SK-N-SH (cell line): ENCODE measurements at regions of chr1 and their contacts with region 1.

Region 1: GRCh38 chr1:15152318-15153183 is 996 bp upstream of the TMEM51 start:
- DNase-seq: peak; percentile 79
- H3K4me3 ChIP-seq: peak overlapping the region; percentile 77 to 84
- H3K27ac ChIP-seq: peak overlapping the region; percentile 62 to 100
- H3K4me1 ChIP-seq: peaks cover 4 to 70% of the 10 kb centered on the region in 2 experiments; a peak in 3 of 4 replicates
- H3K27me3 ChIP-seq: no peaks in the 10 kb centered on the region
- CTCF ChIP-seq: peak; percentile 76
- EP300 ChIP-seq: peak in 1 of 2 experiments; percentile 29; a peak in 1 of 4 replicates
- RAD21 ChIP-seq: peak; percentile 76

Region 2: DNA sequence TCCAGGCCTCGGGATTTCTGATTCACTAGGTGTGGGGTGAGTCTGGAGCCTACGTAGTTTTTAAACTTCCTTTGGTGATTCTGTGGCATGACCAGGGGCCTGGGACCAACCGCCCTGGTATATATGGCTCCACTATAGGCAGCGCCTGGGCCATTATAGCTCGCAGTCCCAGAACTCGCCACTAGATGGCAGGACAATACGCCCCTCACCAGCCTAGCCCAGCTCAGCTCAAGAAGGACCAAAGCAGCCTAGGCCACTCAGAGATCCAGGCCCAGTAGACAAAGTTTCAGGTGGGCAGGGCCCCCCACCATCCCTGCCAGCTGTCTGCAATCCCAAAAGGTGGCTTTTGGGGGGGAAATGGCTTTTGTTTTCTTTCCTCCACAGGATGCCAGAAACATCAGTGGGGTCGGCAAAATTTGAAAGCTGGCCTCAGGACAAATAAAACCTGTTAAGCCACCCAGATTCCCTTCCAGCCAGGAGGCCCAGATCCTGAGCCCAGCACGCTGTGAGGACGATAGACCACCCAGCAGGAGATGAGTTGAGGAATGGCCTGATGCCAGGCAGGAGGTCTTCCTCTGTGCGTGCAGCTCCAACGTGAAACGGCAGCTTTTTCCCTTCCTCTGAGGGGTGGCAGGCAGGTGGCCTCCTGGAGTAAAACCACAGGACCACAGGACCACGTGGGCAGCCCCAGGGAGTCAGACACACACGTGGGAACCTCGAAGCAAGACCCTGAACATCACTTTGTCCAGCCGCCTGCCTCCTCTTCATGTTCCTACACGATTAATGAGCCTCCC is 23.8 kb before region 1 on chr1:
- CTCF ChIA-PET with region 1: interaction called, 88 read pairs
- POLR2A ChIA-PET with region 1: interaction called, 24 read pairs
- DNase-seq: peak; percentile 88
- H3K4me3 ChIP-seq: peak overlapping the region in 1 of 2 experiments; percentile 43; a peak in 1 of 4 replicates
- H3K27ac ChIP-seq: peak overlapping the region in 1 of 2 experiments; percentile 71; a peak in 2 of 4 replicates
- H3K4me1 ChIP-seq: peaks cover 0 to 7% of the 10 kb centered on the region in 2 experiments; a peak in 1 of 4 replicates
- H3K27me3 ChIP-seq: no peaks in the 10 kb centered on the region
- CTCF ChIP-seq: peak; percentile 90
- EP300 ChIP-seq: peak in 1 of 2 experiments; percentile 38; a peak in 1 of 4 replicates
- RAD21 ChIP-seq: peak; percentile 96

Region 3: GRCh38 chr1:15168479-15168878 is 15.9 kb after region 1 on chr1:
- CTCF ChIA-PET with region 1: interaction called, 19 read pairs
- POLR2A ChIA-PET with region 1: interaction called, 4 read pairs
- DNase-seq: no peak
- H3K4me3 ChIP-seq: no peak overlapping the region
- H3K27ac ChIP-seq: peak overlapping the region in 1 of 2 experiments; percentile 78; a peak in 2 of 4 replicates
- H3K4me1 ChIP-seq: peaks cover 11 to 19% of the 10 kb centered on the region in 2 experiments; a peak in 2 of 4 replicates
- H3K27me3 ChIP-seq: no peaks in the 10 kb centered on the region
- CTCF ChIP-seq: peak; percentile 30; the same call in 1 of the 2 replicates
- EP300 ChIP-seq: no peak
- RAD21 ChIP-seq: no peak

Region 4: DNA sequence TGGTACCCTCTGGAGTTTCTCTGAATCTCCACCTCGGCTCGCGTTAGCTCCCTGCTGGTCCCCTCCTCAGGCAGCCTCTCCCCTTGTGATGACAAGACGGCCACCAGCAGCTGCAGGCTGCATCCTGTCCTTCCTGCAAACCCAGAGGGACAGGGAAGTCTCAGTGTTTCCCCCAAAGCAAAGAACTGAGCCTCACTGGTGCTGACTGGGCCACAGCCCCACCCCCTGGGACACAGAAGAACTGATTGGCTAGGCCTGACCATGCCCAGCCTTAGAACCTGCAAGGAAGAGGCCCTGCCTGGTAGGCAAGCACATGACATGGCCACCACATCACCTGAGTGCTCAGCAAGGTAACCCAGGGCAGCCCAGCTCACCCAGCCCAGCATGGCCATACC is 35.6 kb after region 1 on chr1:
- CTCF ChIA-PET with region 1: interaction called, 132 read pairs
- POLR2A ChIA-PET with region 1: interaction called, 8 read pairs
- DNase-seq: peak; percentile 51
- H3K4me3 ChIP-seq: no peak overlapping the region
- H3K27ac ChIP-seq: peak overlapping the region; percentile 19 to 89; a peak in 3 of 4 replicates
- H3K4me1 ChIP-seq: peaks cover 18 to 62% of the 10 kb centered on the region in 2 experiments; a peak in 3 of 4 replicates
- H3K27me3 ChIP-seq: no peaks in the 10 kb centered on the region
- CTCF ChIP-seq: no peak
- EP300 ChIP-seq: no peak
- RAD21 ChIP-seq: no peak

Region 5: DNA sequence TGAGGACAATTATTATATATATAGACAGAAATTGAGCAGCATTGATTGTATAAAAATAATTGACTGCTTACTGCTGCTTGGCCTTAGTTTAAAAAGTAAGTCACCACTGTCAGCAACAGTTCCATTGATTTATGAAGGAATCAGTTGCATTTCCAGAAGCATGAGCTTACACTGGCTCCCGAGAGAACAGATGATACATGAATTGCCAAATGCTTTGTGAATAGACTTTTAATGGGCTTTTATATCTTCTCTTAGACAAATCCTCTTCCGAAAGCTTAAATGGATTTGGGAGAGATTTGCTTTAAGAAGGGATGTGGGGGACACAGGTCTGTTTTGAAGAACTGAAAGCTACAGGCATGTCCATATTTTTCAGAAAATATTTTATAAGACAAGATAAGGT is 102.0 kb after region 1 on chr1:
- CTCF ChIA-PET with region 1: interaction called, 11 read pairs
- POLR2A ChIA-PET with region 1: no interaction called
- DNase-seq: no peak
- H3K4me3 ChIP-seq: no peak overlapping the region
- H3K27ac ChIP-seq: no peak overlapping the region
- H3K4me1 ChIP-seq: peaks cover 0 to 2% of the 10 kb centered on the region in 2 experiments; a peak in 1 of 4 replicates
- H3K27me3 ChIP-seq: no peaks in the 10 kb centered on the region; the same call in 1 of the 2 replicates
- CTCF ChIP-seq: no peak
- EP300 ChIP-seq: no peak
- RAD21 ChIP-seq: no peak

Region 6: GRCh38 chr1:15272009-15272788 is 119.6 kb after region 1 on chr1:
- CTCF ChIA-PET with region 1: interaction called, 65 read pairs
- POLR2A ChIA-PET with region 1: interaction called, 9 read pairs
- DNase-seq: peak; percentile 85
- H3K4me3 ChIP-seq: no peak overlapping the region
- H3K27ac ChIP-seq: no peak overlapping the region
- H3K4me1 ChIP-seq: peaks cover 0 to 5% of the 10 kb centered on the region in 2 experiments; a peak in 1 of 4 replicates
- H3K27me3 ChIP-seq: no peaks in the 10 kb centered on the region
- CTCF ChIP-seq: peak; percentile 82
- EP300 ChIP-seq: no peak
- RAD21 ChIP-seq: peak; percentile 96